Mammary epithelial cell (primary cell): ENCODE measurements at regions of chrX and their contacts with region 1.

Region 1: DNA sequence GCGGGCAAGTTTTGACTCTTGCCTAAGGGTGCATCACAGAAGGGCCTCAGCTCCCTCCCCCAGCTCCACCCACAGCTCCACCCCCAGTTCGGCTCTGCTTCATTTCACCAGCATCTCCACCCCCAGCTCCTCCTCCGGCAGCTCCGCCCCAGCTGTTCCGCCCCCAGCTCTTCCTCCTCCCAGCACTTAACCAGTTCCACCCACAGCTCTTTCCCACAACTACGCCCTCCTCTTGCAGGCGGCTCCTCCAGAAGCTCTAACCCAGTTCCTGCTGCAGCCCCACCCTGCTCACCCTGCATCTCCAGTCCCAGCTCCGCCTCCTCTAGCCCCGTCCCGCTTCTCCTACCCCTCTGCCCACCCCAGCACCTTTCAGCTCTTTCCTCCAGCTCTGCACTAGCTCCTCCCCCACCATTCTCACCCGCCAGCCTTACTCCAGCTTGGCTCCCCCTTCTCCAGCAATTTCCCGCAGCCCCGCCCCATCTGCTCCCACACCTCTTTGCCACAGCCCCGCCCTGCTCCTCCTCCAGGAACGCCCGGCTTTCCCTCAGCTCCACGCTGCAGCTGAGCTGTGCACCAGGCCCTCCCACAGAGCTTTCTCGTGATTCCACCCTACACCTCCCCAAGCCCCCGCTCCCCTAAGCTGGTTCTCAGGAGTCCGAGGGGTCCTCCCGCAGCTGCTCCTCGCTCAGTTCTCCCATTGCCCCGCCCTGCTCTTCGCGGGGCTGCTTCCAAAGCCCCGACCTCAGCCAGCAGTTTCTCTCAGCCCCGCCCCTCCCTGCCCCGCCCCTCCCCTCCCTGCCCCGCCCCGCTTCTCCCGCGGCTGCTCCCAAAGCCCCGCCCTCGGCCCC is 1.3 kb upstream of the EOLA1 start:
- DNase-seq: peak; percentile 88
- H3K4me3 ChIP-seq: peak overlapping the region; percentile 48 to 57 (median 51)
- H3K27ac ChIP-seq: peak overlapping the region; percentile 0
- H3K4me1 ChIP-seq: peaks cover 6% of the 10 kb centered on the region
- H3K27me3 ChIP-seq: no peaks in the 10 kb centered on the region
- CTCF ChIP-seq: no peak

Region 2: DNA sequence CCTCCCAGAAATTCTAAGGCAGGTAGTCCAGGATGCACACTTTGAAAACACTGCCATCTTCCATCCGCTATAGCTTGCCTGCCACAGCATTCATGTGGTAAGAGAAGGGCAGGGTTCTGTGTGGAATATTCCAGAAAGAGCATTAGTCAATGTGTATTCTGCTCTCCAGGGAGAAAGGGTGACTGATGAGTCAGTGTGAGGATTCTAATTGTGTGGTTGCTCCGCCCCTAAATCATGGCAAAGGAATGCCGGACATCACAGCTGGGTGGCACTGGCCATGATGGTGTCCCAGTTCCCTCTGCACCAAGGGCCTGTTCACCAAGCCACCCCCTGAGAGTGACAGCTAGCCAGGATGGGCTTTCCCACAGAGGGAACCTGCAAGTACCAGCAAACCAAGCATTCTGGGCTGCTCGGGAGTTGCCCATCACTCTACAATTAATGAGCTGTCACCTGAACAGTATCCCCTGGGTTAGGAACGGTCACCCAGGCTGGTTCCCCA is 43.9 kb before region 1 on chrX:
- CTCF ChIA-PET with region 1: no interaction called
- dilution Hi-C with region 1: no loop called
- in situ Hi-C with region 1: no loop called
- intact Hi-C with region 1: loop called (anchors 2 kb)
- DNase-seq: peak; percentile 86
- H3K4me3 ChIP-seq: no peak overlapping the region
- H3K27ac ChIP-seq: peak overlapping the region; percentile 83
- H3K4me1 ChIP-seq: peaks cover 42% of the 10 kb centered on the region
- H3K27me3 ChIP-seq: no peaks in the 10 kb centered on the region
- CTCF ChIP-seq: no peak